ENCODE measurements at regions of chr19 and their contacts with region 1.

Region 1: DNA sequence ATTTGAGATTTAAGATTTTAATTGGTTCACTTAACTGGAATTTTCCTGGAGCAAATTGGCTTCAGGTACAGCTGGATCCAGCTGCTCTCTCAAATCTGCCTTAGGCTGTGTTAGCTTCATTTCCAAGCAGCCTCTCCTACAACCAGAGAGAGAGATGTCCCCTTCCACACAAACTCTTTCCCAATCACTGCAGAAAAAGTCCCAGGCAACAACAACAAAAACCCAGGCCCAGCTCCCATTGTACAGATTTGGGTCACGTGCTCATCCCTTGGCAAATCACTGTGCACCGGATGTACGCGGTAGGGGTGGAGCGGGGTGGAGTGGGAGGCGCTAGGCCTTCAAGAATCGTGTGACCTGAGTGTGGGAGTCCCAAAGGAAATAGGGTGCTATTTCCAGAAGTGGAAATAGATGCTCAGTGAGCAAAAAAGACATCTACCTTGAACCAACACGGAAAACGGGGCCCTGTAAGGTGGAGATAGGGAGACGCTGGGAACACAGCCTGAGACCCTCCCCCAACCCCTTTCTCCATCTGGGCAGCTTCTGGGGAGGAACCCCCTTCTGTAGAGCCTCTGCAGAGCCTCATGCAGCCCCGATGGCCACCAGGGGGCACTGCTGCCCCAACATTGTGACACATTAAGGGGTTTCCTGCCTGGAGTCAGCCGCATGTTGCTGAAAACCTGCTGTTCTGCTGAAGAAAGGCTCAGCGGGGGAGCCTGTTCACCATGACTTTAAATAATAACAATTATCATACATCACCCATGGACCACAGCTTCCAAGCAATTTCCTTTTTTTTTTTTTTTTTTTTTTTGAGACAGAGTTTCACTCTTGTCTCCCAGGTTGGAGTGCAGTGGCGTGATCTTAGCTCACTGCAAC is 25.4 kb downstream of the HPN start:
- DNase-seq: peak; percentile 81 to 91 (median 85)
- H3K4me3 ChIP-seq: no peak overlapping the region
- H3K27ac ChIP-seq: no peak overlapping the region
- H3K4me1 ChIP-seq: no peaks in the 10 kb centered on the region
- H3K27me3 ChIP-seq: no peaks in the 10 kb centered on the region
- CTCF ChIP-seq: peak; percentile 81 to 91 (median 86)
- POLR2A ChIP-seq: no peak

Region 2: GRCh38 chr19:35135389-35135909 is 68.5 kb after region 1 on chr19:
- intact Hi-C with region 1: loop called in 1 of 2 experiments (anchors 10 kb)
- DNase-seq: peak; percentile 54 to 84 (median 75)
- H3K4me3 ChIP-seq: no peak overlapping the region
- H3K27ac ChIP-seq: peak overlapping the region in 1 of 5 donors; percentile 62
- H3K4me1 ChIP-seq: no peaks in the 10 kb centered on the region
- H3K27me3 ChIP-seq: no peaks in the 10 kb centered on the region
- CTCF ChIP-seq: peak; percentile 78 to 91 (median 82)
- POLR2A ChIP-seq: no peak

Region 3: GRCh38 chr19:35151273-35151672 is 84.3 kb after region 1 on chr19:
- intact Hi-C with region 1: no loop called
- DNase-seq: no peak
- H3K4me3 ChIP-seq: no peak overlapping the region
- H3K27ac ChIP-seq: no peak overlapping the region
- H3K4me1 ChIP-seq: peaks cover 6 to 18% of the 10 kb centered on the region in 2 donors
- H3K27me3 ChIP-seq: peaks cover 13% of the 10 kb centered on the region
- CTCF ChIP-seq: no peak
- POLR2A ChIP-seq: no peak